ENCODE measurements at regions of chr11 and their contacts with region 1.

Region 1: GRCh38 chr11:64000026-64000739 is 13.9 kb downstream of the OTUB1 start:
- DNase-seq: peak; percentile 72
- H3K4me3 Mint-ChIP-seq: no peak overlapping the region
- H3K27ac Mint-ChIP-seq: no peak overlapping the region
- H3K4me1 Mint-ChIP-seq: peaks cover 5% of the 10 kb centered on the region
- H3K27me3 Mint-ChIP-seq: peaks cover 6% of the 10 kb centered on the region

Region 2: DNA sequence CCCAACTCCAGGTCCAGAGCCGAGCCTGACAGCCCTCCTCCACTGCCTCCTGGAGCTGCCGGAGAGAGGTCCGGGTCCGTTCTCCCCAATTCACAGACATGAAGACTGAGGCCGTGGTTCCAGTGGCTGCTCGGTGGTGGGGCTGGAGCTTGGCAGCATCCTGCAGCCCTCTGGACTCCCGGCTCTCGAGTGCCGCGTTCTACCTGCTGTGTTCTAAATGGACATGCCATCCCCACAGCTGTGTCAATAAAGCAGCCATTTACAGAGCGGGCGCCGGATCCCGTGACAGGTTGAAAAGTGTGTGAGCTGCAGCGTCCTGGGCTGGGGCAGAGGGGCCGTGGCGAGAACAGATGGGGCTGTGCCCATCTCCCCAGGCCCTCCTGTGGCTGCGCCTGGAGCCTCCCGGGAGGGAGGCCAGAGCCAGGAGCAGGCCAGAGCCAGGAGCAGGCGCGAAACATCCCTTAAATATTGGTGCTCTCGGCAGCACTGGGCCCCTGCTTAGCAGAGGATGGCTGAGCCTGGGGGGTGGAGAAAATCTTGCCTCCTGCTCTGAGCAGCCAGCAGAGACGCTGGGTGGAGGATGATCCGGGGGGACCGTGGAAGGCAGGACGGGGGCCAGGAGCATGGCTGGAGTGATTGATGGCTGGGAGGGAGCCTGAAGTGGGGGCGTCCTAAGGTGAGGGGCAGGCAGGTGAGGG is 81.7 kb after region 1 on chr11:
- CTCF ChIA-PET with region 1: no interaction called
- intact Hi-C with region 1: no loop called
- DNase-seq: no peak
- H3K4me3 Mint-ChIP-seq: no peak overlapping the region
- H3K27ac Mint-ChIP-seq: no peak overlapping the region
- H3K4me1 Mint-ChIP-seq: no peaks in the 10 kb centered on the region
- H3K27me3 Mint-ChIP-seq: no peaks in the 10 kb centered on the region

Region 3: DNA sequence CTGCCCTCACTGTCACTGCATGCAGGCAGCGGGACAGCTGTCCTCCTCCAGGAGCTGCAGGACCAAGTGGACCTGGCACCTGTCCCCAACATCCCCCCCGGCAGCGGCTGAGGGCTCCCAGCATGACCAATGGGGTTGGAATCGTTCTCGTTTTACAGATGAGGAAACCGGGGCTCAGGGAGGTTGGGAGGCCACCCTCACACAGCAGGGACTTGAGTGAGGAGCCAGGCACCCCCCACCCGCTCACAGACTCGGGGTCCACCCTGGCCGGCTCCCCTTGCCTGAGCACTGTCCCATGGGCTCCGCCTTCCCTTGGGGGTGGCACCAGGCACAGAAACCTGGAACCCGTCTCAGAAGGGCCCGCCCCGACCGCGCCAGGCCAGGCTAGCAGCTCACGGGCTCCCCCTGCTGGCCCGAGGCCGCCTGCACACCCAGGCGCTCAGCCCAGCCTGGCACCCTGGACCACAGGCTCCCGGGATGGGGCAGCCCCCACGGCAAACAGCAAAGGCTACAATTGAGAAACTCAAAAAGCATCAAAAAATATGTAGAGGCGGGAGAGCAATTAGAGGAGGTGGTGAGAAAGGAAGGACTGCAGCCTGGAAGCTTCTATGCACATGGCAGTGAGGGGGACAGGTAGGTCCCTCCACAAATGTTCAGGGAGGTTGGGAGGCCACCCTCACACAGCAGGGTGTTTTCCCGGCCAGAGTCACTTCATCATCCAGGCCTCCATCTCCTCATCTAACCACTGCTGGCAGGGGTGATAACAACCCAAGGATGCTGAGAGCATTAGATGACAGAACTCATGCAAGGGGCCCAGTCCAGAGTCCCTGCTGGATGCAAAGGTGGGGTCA is 152.9 kb after region 1 on chr11:
- CTCF ChIA-PET with region 1: interaction called, 96 read pairs
- intact Hi-C with region 1: loop called (anchors 1 kb)
- DNase-seq: peak; percentile 71
- H3K4me3 Mint-ChIP-seq: no peak overlapping the region
- H3K27ac Mint-ChIP-seq: no peak overlapping the region
- H3K4me1 Mint-ChIP-seq: peaks cover 3% of the 10 kb centered on the region
- H3K27me3 Mint-ChIP-seq: no peaks in the 10 kb centered on the region